ENCODE measurements at regions of chr11 and their contacts with region 1.

Region 1: DNA sequence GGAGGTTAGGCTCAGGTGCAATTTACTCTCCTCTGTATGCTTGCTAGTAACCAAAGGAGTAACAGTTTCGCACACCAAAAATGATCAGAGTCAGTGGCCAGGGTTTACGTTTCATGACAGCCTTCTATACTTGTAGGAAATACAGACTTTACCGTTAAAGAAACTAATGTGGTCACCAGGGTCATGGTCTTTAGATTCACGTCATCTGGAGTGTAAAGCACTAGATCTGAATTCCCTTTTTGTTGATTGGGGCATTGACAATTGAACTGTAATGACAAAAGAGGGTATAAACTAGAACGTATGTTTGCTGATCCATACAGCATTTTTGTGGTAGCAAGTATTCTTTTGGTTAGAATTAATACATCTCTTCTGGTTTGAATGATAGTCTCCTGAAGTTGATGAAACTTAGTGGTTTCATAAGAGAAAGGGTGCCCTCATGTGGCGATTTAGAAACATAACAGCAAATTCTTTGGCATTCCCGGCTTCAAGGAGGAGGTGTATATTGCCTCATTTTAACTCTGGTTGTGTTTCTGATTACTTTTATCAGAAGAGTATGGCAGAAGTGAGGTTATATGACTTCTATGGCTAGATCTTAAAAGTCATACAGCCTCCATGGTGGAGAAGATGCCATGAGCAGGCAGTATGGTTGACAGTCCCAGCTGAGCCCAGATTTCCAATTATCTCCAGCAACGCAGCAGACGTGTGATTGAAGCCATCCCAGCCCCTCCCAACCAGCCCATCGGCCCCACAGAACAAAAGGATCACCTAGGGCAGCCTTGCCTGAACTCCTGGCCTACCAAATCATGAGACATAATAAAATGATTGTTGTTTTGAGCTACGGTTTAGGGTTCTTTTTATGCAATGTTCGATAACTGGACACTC is 35.1 kb downstream of the MMP7 start:
- DNase-seq: peak; percentile 14 to 84
- H3K4me3 ChIP-seq: no peak overlapping the region
- H3K27ac ChIP-seq: no peak overlapping the region
- H3K4me1 ChIP-seq: peaks cover 18% of the 10 kb centered on the region
- H3K27me3 ChIP-seq: no peaks in the 10 kb centered on the region
- CTCF ChIP-seq: peak; percentile 91

Region 2: DNA sequence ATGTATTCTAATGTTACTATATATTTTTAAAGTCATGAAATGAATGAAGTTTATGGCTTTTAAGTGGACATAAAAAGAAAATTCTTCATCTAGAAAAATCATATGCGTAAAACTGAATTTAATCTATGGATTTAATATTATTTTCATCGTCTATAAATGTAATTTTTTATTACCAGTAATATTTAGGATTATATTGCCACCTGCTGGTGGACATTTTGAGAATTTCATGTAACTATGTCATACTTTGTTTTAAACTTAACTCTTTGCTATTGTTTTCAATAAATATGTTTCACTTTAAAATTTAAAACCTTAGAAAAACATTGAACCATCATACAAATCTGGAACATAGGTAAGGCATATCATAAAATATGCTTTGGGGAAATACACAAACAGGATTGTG is 647.1 kb before region 1 on chr11:
- CTCF ChIA-PET with region 1: no interaction called
- POLR2A ChIA-PET with region 1: no interaction called
- intact Hi-C with region 1: loop called (anchors 2 kb)
- DNase-seq: no peak
- H3K4me3 ChIP-seq: no peak overlapping the region
- H3K27ac ChIP-seq: no peak overlapping the region
- H3K4me1 ChIP-seq: no peaks in the 10 kb centered on the region; the same call in 1 of the 2 replicates
- H3K27me3 ChIP-seq: no peaks in the 10 kb centered on the region
- CTCF ChIP-seq: peak; percentile 87

Region 3: DNA sequence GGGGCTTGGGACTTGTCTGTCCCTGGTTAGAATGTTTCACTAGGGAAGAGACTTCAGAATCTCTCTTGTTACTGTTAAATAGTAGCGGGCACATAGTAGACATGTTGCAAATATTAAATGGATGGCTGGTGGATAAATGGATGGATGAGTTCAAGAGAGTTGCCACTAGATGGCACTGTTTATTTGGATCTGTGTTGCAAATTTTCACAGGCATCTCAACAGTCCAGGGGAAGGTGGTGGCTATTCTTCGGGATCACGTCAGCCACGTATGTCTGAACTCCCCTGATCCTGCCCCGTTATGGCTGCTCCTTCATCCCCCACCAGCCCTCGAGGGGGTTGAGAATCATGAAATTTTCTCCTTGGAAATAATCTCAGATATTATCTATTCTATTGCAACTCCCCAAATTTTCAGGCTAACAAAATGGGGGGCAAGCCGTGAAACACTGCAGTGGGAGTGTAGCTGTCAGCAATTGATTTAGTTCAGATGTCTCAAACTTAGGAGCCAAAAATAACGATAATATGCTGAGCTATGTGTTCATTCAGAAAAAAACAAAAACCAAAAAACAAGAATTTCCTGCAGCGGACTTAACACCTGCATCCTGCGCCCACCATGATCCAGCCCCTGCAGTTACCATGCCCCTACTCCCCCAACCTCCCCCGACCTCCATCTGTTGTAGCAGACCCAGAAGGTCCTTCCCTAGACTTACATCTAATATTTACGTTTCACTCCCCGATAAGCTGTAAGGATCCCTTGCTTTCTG is 207.3 kb before region 1 on chr11:
- CTCF ChIA-PET with region 1: no interaction called
- POLR2A ChIA-PET with region 1: no interaction called
- intact Hi-C with region 1: loop called (anchors 1 kb)
- DNase-seq: peak; percentile 38 to 67
- H3K4me3 ChIP-seq: no peak overlapping the region
- H3K27ac ChIP-seq: no peak overlapping the region
- H3K4me1 ChIP-seq: peaks cover 24% of the 10 kb centered on the region
- H3K27me3 ChIP-seq: no peaks in the 10 kb centered on the region
- CTCF ChIP-seq: peak; percentile 92

Region 4: GRCh38 chr11:102367364-102367763 is 128.0 kb before region 1 on chr11:
- CTCF ChIA-PET with region 1: no interaction called
- POLR2A ChIA-PET with region 1: interaction called, 7 read pairs
- intact Hi-C with region 1: loop called (anchors 2 kb)
- DNase-seq: peak in 1 of 2 experiments; percentile 63
- H3K4me3 ChIP-seq: no peak overlapping the region
- H3K27ac ChIP-seq: no peak overlapping the region
- H3K4me1 ChIP-seq: no peaks in the 10 kb centered on the region
- H3K27me3 ChIP-seq: no peaks in the 10 kb centered on the region
- CTCF ChIP-seq: peak; percentile 67

Region 5: GRCh38 chr11:102451681-102452460 is 43.5 kb before region 1 on chr11:
- CTCF ChIA-PET with region 1: no interaction called
- POLR2A ChIA-PET with region 1: no interaction called
- intact Hi-C with region 1: loop called (anchors 2 kb)
- DNase-seq: peak; percentile 53 to 63
- H3K4me3 ChIP-seq: peak overlapping the region; percentile 88
- H3K27ac ChIP-seq: peak overlapping the region; percentile 72
- H3K4me1 ChIP-seq: peaks cover 62% of the 10 kb centered on the region
- H3K27me3 ChIP-seq: no peaks in the 10 kb centered on the region
- CTCF ChIP-seq: peak; percentile 20; the same call in 1 of the 2 replicates

Region 6: GRCh38 chr11:102666331-102666957 is 171.0 kb after region 1 on chr11:
- CTCF ChIA-PET with region 1: no interaction called
- POLR2A ChIA-PET with region 1: no interaction called
- intact Hi-C with region 1: loop called (anchors 2 kb)
- DNase-seq: peak; percentile 22 to 46
- H3K4me3 ChIP-seq: no peak overlapping the region
- H3K27ac ChIP-seq: no peak overlapping the region
- H3K4me1 ChIP-seq: no peaks in the 10 kb centered on the region
- H3K27me3 ChIP-seq: no peaks in the 10 kb centered on the region
- CTCF ChIP-seq: peak; percentile 96

Measured in PC-9 (cell line).